OCI-LY7 (cell line): ENCODE measurements at regions of chr16 and their contacts with region 1.

Region 1: GRCh38 chr16:75110637-75111513 is 5.7 kb downstream of the LDHD start:
- DNase-seq: peak; percentile 93
- H3K4me3 ChIP-seq: peak overlapping the region; percentile 53
- H3K27ac ChIP-seq: peak overlapping the region; percentile 64
- H3K4me1 ChIP-seq: peaks cover 60% of the 10 kb centered on the region
- CTCF ChIP-seq: peak; percentile 92

Region 2: GRCh38 chr16:74709441-74709877 is 401.4 kb before region 1 on chr16:
- CTCF ChIA-PET with region 1: no interaction called
- POLR2A ChIA-PET with region 1: interaction called, 5 read pairs
- intact Hi-C with region 1: loop called (anchors 2 kb)
- DNase-seq: peak; percentile 80
- H3K4me3 ChIP-seq: no peak overlapping the region
- H3K27ac ChIP-seq: no peak overlapping the region
- H3K4me1 ChIP-seq: no peaks in the 10 kb centered on the region
- CTCF ChIP-seq: peak; percentile 100

Region 3: GRCh38 chr16:74813109-74813641 is 297.7 kb before region 1 on chr16:
- CTCF ChIA-PET with region 1: interaction called, 3 read pairs
- POLR2A ChIA-PET with region 1: no interaction called
- intact Hi-C with region 1: loop called (anchors 1 kb)
- DNase-seq: peak; percentile 80
- H3K4me3 ChIP-seq: no peak overlapping the region
- H3K27ac ChIP-seq: no peak overlapping the region
- H3K4me1 ChIP-seq: peaks cover 5% of the 10 kb centered on the region
- CTCF ChIP-seq: peak; percentile 94

Region 4: GRCh38 chr16:74862741-74863244 is 248.1 kb before region 1 on chr16:
- CTCF ChIA-PET with region 1: interaction called, 5 read pairs
- POLR2A ChIA-PET with region 1: interaction called, 4 read pairs
- intact Hi-C with region 1: loop called (anchors 1 kb)
- DNase-seq: peak; percentile 69
- H3K4me3 ChIP-seq: no peak overlapping the region
- H3K27ac ChIP-seq: no peak overlapping the region
- H3K4me1 ChIP-seq: peaks cover 11% of the 10 kb centered on the region
- CTCF ChIP-seq: peak; percentile 99

Region 5: DNA sequence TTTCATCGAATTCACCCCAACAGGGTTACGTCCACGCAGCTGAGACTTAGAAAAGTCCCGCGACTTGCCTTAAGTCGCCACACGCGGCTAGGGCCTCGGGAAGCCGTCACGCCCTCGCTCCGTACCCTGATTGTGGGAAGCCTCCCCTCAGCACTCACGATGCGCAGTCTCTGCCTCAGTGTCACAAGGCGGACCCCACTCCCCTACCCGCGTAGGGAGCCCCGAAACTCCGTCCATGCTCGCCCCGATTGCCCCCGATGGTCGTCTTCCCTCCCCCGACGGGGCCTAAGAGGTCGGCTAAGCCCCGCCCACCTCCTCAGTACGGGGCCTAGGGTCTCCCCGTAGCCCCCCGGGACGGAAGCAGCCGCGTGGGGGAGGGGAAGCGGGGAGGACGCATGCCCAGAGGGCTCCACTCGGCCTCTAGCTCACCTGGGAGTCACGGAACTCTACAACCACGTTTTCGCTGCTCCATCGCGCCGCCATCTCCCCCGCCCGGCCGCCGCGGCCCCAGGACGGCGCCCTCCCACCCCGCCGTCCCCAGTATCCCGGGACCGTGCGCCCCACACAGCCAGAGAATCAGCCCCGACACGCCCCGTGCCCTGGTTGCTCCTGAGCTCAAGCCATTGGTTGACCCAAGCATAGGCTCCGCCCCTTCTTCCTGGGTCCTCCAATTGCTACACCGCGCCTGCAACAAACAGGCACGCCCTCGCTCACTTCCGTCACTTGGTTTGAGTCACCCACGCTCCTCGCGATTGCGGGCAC is 126.2 kb before region 1 on chr16 and contains the start of gene WDR59:
- CTCF ChIA-PET with region 1: interaction called, 7 read pairs
- POLR2A ChIA-PET with region 1: interaction called, 11 read pairs
- intact Hi-C with region 1: no loop called
- DNase-seq: peak; percentile 100
- H3K4me3 ChIP-seq: peak within 1 kb of the TSS; percentile 98
- H3K27ac ChIP-seq: peak within 1 kb of the TSS; percentile 41
- H3K4me1 ChIP-seq: no peaks in the 10 kb centered on the region
- CTCF ChIP-seq: no peak
- total RNA-seq, gene WDR59: 25.2 and 26.3 TPM in 2 replicates

Region 6: GRCh38 chr16:74998481-74999218 is 112.2 kb before region 1 on chr16 and contains the start of gene ZNRF1:
- CTCF ChIA-PET with region 1: interaction called, 30 read pairs
- POLR2A ChIA-PET with region 1: interaction called, 6 read pairs
- intact Hi-C with region 1: loop called (anchors 1 kb)
- DNase-seq: peak; percentile 84
- H3K4me3 ChIP-seq: peak within 1 kb of the TSS; percentile 92
- H3K27ac ChIP-seq: peak within 1 kb of the TSS; percentile 29
- H3K4me1 ChIP-seq: peaks cover 26% of the 10 kb centered on the region
- CTCF ChIP-seq: peak; percentile 87
- total RNA-seq, gene ZNRF1: 11.8 and 13.1 TPM in 2 replicates

Region 7: DNA sequence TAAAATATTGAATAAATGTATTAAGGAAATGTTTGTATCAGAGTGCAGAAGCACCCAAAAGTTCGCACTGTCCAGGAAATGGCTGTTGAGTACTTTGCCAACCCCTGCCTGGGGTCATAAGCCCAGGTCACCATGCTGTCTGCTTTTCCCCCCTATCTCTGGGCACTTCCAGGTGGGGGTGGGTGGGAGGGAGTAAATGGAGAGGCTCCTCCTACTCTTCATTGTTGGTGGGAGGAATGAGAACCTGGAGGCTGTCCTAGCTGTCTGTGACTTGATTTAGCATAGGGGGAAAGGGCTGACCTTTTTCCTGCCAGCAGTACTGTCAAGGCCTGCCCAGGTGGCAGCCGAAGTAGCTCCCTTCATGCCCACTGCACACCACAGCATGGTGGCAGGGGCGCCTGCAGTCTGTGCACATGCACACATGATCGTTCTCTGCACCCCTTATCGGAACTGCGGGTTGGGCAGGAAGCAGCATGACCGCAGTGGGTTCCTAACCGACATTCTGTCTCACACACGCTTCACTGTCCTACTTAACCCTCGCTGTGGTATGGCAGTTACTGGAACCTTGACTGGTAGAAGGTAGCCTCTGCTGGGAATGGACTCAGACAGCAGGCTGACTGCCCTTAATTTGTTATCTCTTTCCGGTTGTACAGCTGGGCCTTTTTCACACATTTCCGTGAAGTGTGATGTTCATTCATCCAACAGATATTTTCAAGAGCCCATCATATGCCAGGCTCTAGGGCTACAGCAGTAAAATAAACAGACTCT is 35.8 kb before region 1 on chr16:
- CTCF ChIA-PET with region 1: interaction called, 5 read pairs
- POLR2A ChIA-PET with region 1: interaction called, 6 read pairs
- intact Hi-C with region 1: loop called (anchors 1 kb)
- DNase-seq: peak; percentile 88
- H3K4me3 ChIP-seq: peak overlapping the region; percentile 54
- H3K27ac ChIP-seq: peak overlapping the region; percentile 86
- H3K4me1 ChIP-seq: peaks cover 30% of the 10 kb centered on the region
- CTCF ChIP-seq: no peak

Region 8: DNA sequence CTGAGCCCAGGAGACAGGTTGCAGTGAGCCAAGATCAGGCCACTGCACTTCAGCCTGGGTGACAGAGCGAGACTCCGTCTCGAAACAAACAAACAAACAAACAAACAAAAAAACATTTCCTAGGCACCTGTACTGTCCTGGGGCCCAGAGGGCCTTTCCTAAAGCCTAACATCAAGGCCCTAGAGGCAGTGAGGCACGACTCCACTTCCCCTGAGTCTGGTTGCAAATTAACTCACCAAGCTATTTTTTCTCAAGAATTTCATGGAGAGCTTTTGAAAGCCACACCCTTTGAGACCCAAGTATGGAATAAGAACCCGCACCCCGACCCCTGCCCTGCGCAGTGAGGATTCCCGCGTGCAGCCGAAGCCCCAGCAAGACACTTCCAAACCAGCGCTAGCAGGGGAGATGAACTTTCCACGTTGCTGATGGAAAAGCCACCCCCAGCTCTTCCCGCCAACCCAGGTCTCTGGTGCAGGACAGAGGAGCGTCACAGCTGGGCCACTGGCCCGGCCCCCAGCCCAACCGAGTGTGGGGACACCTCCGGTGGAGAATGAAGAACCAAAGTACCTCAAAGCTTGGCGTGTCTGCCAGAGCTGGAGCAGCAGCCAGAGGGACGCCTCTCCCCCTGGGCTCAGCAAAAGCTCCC is 423.8 kb after region 1 on chr16:
- CTCF ChIA-PET with region 1: no interaction called
- POLR2A ChIA-PET with region 1: no interaction called
- intact Hi-C with region 1: no loop called
- DNase-seq: no peak
- H3K4me3 ChIP-seq: no peak overlapping the region
- H3K27ac ChIP-seq: no peak overlapping the region
- H3K4me1 ChIP-seq: no peaks in the 10 kb centered on the region
- CTCF ChIP-seq: no peak